CD4-positive, alpha-beta memory T cell (primary cell): ENCODE measurements at regions of chr1 and their contacts with region 1.

Region 1: DNA sequence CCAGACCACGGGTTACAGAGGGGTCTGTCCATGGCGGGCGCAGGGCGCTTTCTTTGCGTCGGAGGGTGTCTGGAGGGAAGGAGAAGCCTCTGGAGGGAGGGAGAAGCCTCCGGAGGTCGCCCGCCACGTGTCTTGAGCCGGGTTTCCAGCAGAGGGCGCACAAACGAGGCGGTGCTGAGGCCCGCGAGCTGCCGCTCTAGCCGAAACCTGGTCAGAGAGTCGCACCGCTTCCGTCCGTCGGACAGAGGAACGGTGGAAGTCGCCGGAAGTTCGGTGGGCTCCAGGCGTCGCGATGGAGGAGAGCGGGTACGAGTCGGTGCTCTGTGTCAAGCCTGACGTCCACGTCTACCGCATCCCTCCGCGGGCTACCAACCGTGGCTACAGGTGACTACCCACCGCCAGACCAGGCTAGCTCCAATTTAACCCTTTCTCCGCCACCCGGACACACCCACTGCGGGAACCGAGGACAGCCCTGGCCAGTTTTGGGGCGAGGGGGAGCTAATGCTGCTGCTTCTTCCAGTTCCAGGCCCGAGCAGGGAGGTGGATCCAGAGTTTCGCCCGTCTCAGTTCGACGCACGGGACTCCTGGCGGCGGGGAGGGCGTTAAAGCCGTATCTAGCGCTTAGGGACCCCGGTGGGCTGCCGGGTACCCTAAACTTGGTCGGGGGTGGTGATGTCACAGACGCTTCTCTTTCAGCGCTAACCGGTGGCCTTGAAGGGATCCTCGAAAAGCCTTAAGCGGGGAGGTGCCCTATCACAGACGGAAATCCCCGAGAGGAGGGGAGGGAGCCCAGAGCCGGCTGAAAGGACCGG is at the start of gene NECAP2:
- DNase-seq: peak; percentile 87 to 89 (median 88)
- H3K4me3 ChIP-seq: peak within 1 kb of the TSS; percentile 86 to 97
- H3K4me3 Mint-ChIP-seq: peak within 1 kb of the TSS; percentile 91 to 99 (median 96)
- H3K27ac ChIP-seq: peak within 1 kb of the TSS; percentile 100
- H3K27ac Mint-ChIP-seq: peak within 1 kb of the TSS; percentile 94 to 99 (median 96)
- H3K4me1 ChIP-seq: peaks cover 44% of the 10 kb centered on the region
- H3K4me1 Mint-ChIP-seq: peaks cover 20 to 50% (median 34%) of the 10 kb centered on the region in 4 donors
- H3K27me3 ChIP-seq: no peaks in the 10 kb centered on the region
- H3K27me3 Mint-ChIP-seq: no peaks in the 10 kb centered on the region
- total RNA-seq, gene NECAP2: 154 to 165 TPM

Region 2: DNA sequence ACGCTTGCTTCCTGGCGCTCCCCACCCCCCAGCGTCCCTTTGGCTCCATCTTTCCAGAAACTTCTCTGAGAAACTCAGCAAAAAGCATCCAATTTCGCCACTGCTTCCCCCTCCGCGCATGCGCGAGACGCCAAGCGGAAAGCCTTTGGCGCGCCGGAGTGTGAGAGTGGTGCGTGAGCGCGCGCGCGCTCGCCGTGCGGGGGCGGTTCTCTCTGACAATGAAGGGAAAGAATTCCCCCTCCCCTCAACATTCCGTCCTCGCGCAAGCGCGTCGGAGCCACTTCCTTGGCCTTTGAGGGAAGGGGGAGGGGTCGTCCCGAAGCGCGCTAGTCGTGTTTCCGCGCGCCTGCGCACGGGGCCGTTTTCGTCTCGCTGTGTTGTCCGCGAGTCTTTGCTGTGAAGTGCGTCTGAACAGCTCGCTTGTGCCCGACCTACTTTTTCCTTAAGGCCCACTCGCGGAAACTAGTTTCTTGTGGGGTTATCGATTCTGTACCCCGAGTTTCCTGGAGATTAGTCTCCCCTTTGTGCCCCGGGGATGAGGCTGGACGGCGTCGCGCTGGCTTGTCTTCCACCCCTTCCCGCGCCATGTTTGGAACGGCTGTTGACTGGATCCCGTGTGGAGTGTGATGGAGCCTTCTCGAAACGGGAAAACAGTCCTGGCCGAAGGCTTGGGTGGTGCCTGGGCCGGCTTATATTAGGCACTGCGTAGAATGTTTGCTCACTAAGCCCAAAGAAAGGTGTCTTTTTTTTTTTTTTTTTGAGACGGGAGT is 604.8 kb before region 1 on chr1:
- CTCF ChIA-PET with region 1: no interaction called
- POLR2A ChIA-PET with region 1: no interaction called
- intact Hi-C with region 1: no loop called
- DNase-seq: peak; percentile 97 to 99 (median 99)
- H3K4me3 ChIP-seq: peak overlapping the region; percentile 86 to 88
- H3K4me3 Mint-ChIP-seq: peak overlapping the region; percentile 92 to 98 (median 96)
- H3K27ac ChIP-seq: peak overlapping the region; percentile 99
- H3K27ac Mint-ChIP-seq: peak overlapping the region; percentile 98 to 100 (median 99)
- H3K4me1 ChIP-seq: peaks cover 16% of the 10 kb centered on the region
- H3K4me1 Mint-ChIP-seq: peaks cover 8 to 47% (median 14%) of the 10 kb centered on the region in 4 donors
- H3K27me3 ChIP-seq: no peaks in the 10 kb centered on the region
- H3K27me3 Mint-ChIP-seq: no peaks in the 10 kb centered on the region

Region 3: DNA sequence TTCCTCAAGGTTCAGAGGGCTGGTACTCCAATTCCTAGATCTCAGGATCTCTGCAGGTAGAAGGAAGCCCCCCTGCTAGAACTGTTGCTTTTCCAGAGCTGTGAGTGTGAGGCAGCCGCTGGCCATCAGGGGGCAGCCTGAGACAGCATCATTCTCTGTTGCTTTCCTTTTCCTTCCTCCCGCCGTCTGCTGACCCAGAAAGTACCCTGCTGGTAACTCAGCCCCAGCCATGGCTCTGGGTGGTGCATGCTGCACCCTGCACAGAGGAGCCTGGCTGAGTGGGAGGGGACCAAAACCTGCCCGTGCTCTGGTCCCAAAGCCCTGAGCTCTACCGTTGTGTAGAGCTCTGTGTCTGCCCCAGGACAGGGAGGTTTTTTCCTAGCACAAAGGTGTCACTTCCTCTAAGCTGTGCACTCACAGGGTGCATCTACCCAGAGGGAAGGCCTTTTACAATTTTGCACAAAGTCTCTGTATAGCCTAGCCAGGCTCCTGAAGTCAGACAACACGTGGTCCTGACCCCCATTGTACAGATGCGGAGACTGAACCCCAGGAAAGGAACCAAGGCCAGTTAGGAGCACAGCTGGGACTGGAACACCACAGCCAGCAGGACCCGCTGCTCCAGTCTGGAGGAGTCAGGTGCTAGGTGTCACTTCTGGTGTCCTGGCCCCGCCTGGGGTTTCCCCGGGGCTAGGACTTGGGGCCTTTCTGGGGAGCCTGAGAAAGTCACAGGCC is 361.6 kb before region 1 on chr1:
- CTCF ChIA-PET with region 1: no interaction called
- POLR2A ChIA-PET with region 1: no interaction called
- intact Hi-C with region 1: no loop called
- DNase-seq: peak; percentile 73 to 76 (median 75)
- H3K4me3 ChIP-seq: peak overlapping the region in 1 of 2 donors; percentile 7
- H3K4me3 Mint-ChIP-seq: peak overlapping the region; percentile 76 to 92 (median 84)
- H3K27ac ChIP-seq: no peak overlapping the region
- H3K27ac Mint-ChIP-seq: peak overlapping the region in 6 of 7 donors; percentile 31 to 91 (median 58)
- H3K4me1 ChIP-seq: peaks cover 14% of the 10 kb centered on the region
- H3K4me1 Mint-ChIP-seq: peaks cover 8 to 18% (median 12%) of the 10 kb centered on the region in 4 donors
- H3K27me3 ChIP-seq: peaks cover 3% of the 10 kb centered on the region
- H3K27me3 Mint-ChIP-seq: peaks cover 1 to 4% of the 10 kb centered on the region in 2 donors

Region 4: DNA sequence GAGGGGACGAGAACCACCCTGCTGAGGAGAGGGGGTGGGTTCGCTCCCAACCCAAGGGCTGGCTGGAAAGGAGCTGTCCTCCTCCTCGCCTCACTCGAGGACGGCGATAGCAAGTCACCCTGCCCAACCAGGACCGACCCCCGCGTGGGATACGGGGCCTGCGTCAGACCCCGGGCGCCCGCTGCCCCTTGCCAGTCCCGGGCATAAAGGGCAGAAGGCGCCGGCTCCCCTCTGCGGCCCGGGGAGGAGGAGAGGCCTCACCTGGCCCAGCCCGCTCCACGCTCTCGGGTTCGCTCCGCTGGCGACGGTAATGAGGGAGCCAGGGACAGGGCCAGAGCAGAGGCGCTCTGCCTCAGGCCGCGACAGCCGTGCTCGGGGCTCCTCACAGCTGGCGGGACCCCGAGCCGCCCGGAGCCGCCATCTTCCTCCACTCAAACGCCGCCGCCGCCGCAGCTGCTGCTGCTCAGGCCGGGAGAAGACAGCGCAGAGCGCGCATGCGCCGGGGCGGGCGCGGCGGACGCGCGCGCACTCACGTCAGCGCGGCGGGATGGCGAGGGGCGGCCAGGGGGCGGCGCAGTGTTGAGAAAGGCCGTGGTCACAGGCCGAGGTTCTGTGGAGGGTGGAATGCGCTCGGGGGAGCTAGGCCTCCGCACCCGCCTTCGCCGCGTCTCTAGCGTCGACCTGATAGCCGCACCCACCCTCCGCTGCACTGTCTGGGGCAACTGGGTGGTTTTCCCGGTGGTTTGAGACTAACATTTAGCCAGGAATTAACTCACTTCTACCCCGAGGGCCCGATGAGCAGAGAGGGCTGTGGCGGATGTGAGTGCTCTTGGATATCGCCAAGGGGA is 88.5 kb before region 1 on chr1 and contains the start of gene FBXO42:
- CTCF ChIA-PET with region 1: no interaction called
- POLR2A ChIA-PET with region 1: interaction called, 11 read pairs
- intact Hi-C with region 1: loop called (anchors 5 kb)
- DNase-seq: peak; percentile 90 to 95 (median 94)
- H3K4me3 ChIP-seq: peak within 1 kb of the TSS; percentile 88 to 90
- H3K4me3 Mint-ChIP-seq: peak within 1 kb of the TSS; percentile 89 to 97 (median 96)
- H3K27ac ChIP-seq: peak within 1 kb of the TSS; percentile 95
- H3K27ac Mint-ChIP-seq: peak within 1 kb of the TSS; percentile 90 to 98 (median 95)
- H3K4me1 ChIP-seq: peaks cover 44% of the 10 kb centered on the region
- H3K4me1 Mint-ChIP-seq: peaks cover 17 to 37% (median 30%) of the 10 kb centered on the region in 4 donors
- H3K27me3 ChIP-seq: no peaks in the 10 kb centered on the region
- H3K27me3 Mint-ChIP-seq: no peaks in the 10 kb centered on the region
- total RNA-seq, gene FBXO42: 21.6 to 25.6 TPM

Region 5: GRCh38 chr1:16386454-16387113 is 54.1 kb before region 1 on chr1:
- CTCF ChIA-PET with region 1: interaction called, 4 read pairs
- POLR2A ChIA-PET with region 1: interaction called, 12 read pairs
- intact Hi-C with region 1: no loop called
- DNase-seq: no peak
- H3K4me3 ChIP-seq: no peak overlapping the region
- H3K4me3 Mint-ChIP-seq: peak overlapping the region; percentile 58 to 88 (median 81)
- H3K27ac ChIP-seq: peak overlapping the region; percentile 58
- H3K27ac Mint-ChIP-seq: peak overlapping the region; percentile 61 to 95 (median 68)
- H3K4me1 ChIP-seq: peaks cover 70% of the 10 kb centered on the region
- H3K4me1 Mint-ChIP-seq: peaks cover 49 to 78% (median 66%) of the 10 kb centered on the region in 4 donors
- H3K27me3 ChIP-seq: no peaks in the 10 kb centered on the region
- H3K27me3 Mint-ChIP-seq: no peaks in the 10 kb centered on the region

Region 6: DNA sequence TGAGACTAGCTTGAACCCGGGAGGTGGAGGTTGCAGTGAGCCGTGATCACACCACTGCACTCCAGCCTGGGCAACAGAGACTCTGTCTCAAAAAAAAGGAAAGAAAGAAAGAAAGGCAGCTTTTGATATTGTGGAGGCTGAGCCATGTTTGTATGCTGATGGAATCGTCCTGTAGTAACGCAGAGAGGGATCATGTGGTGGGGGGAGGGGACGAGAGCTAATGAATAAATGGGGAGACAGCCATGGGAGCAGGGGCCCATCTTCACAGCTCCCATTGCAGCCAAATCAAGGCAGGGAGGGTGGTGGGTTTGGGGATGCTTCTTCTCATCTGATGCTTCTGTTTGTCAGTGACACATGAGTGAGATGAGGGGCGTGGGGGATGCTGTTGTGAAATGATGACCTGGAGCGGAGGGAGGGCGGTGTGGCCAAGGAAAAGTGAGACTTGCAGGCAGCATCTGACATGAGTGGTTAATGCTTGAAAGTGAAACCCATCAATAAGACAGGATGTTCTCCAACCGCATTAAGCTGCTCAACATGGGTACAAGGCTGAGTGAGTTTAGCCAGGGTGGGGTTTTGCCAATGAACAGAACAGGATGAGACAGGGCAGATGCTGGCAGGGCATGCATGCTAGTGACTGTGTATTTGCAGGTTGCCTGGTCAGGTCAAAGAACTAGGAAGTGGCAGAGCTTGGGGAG is 20.1 kb before region 1 on chr1:
- CTCF ChIA-PET with region 1: interaction called, 19 read pairs
- POLR2A ChIA-PET with region 1: interaction called, 29 read pairs
- intact Hi-C with region 1: loop called (anchors 1 kb)
- DNase-seq: peak; percentile 65 to 77 (median 72)
- H3K4me3 ChIP-seq: peak overlapping the region in 1 of 2 donors; percentile 9
- H3K4me3 Mint-ChIP-seq: peak overlapping the region; percentile 52 to 87 (median 82)
- H3K27ac ChIP-seq: peak overlapping the region; percentile 36
- H3K27ac Mint-ChIP-seq: peak overlapping the region; percentile 80 to 93 (median 93)
- H3K4me1 ChIP-seq: peaks cover 30% of the 10 kb centered on the region
- H3K4me1 Mint-ChIP-seq: peaks cover 24 to 35% (median 29%) of the 10 kb centered on the region in 4 donors
- H3K27me3 ChIP-seq: no peaks in the 10 kb centered on the region
- H3K27me3 Mint-ChIP-seq: no peaks in the 10 kb centered on the region

Region 7: GRCh38 chr1:16498573-16499413 is 58.1 kb after region 1 on chr1:
- CTCF ChIA-PET with region 1: interaction called, 5 read pairs
- POLR2A ChIA-PET with region 1: interaction called, 5 read pairs
- intact Hi-C with region 1: loop called (anchors 1 kb)
- DNase-seq: peak; percentile 78 to 83 (median 79)
- H3K4me3 ChIP-seq: peak overlapping the region; percentile 36 to 72
- H3K4me3 Mint-ChIP-seq: peak overlapping the region; percentile 82 to 95 (median 93)
- H3K27ac ChIP-seq: peak overlapping the region; percentile 59
- H3K27ac Mint-ChIP-seq: peak overlapping the region in 4 of 7 donors; percentile 55 to 87 (median 69)
- H3K4me1 ChIP-seq: peaks cover 5% of the 10 kb centered on the region
- H3K4me1 Mint-ChIP-seq: peaks cover 7 to 31% (median 15%) of the 10 kb centered on the region in 4 donors
- H3K27me3 ChIP-seq: no peaks in the 10 kb centered on the region
- H3K27me3 Mint-ChIP-seq: no peaks in the 10 kb centered on the region

Region 8: DNA sequence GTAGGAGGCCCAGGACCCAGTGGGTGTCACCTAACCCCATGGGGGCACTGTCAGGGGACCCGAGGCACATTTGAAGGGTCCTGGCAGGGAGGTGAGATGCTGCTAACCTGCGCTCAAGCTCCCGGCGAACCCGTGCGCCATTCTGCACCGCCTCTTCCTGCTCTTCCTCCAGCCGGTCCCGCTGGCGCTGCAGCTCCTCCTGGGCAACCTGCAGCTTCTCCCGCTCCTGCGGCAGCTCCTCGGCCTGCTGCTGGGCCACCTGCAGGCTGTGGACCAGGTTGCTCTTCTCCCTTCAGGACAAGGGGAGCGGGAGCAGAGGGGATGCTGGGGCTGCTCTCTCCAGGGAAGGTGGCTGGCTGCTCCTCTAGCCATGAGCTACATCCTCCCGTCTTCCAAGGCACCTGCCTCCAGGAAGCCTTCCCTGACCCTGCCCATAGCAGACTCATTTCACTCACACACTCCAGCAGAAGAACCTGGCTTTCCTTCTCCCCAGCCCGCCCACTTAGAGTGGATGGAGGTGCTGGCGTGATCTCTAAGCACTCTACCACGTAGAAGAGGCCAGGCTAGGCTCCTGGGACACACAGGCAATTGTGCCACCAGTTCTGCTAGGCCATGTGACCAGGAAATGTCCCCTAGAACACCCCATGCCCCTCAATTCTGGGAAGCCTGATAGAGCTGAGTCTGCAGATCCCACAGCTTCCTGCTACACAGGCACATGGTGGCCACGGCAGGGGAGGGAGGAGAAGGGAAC is 187.9 kb after region 1 on chr1:
- CTCF ChIA-PET with region 1: no interaction called
- POLR2A ChIA-PET with region 1: no interaction called
- intact Hi-C with region 1: no loop called
- DNase-seq: no peak
- H3K4me3 ChIP-seq: no peak overlapping the region
- H3K4me3 Mint-ChIP-seq: no peak overlapping the region
- H3K27ac ChIP-seq: no peak overlapping the region
- H3K27ac Mint-ChIP-seq: peak overlapping the region in 3 of 7 donors; percentile 23 to 43 (median 36)
- H3K4me1 ChIP-seq: no peaks in the 10 kb centered on the region
- H3K4me1 Mint-ChIP-seq: peaks cover 0 to 6% (median 2%) of the 10 kb centered on the region in 4 donors
- H3K27me3 ChIP-seq: no peaks in the 10 kb centered on the region
- H3K27me3 Mint-ChIP-seq: no peaks in the 10 kb centered on the region

Region 9: GRCh38 chr1:16904560-16905111 is 464.0 kb after region 1 on chr1:
- CTCF ChIA-PET with region 1: interaction called, 4 read pairs
- POLR2A ChIA-PET with region 1: interaction called, 12 read pairs
- intact Hi-C with region 1: no loop called
- DNase-seq: peak; percentile 99 to 100 (median 100)
- H3K4me3 ChIP-seq: peak overlapping the region; percentile 38 to 66
- H3K4me3 Mint-ChIP-seq: no peak overlapping the region
- H3K27ac ChIP-seq: peak overlapping the region; percentile 97
- H3K27ac Mint-ChIP-seq: no peak overlapping the region
- H3K4me1 ChIP-seq: peaks cover 35% of the 10 kb centered on the region
- H3K4me1 Mint-ChIP-seq: peaks cover 12 to 39% (median 21%) of the 10 kb centered on the region in 4 donors
- H3K27me3 ChIP-seq: no peaks in the 10 kb centered on the region
- H3K27me3 Mint-ChIP-seq: no peaks in the 10 kb centered on the region